BJ (cell line): ENCODE measurements at regions of chr1 and their contacts with region 1.

Region 1: DNA sequence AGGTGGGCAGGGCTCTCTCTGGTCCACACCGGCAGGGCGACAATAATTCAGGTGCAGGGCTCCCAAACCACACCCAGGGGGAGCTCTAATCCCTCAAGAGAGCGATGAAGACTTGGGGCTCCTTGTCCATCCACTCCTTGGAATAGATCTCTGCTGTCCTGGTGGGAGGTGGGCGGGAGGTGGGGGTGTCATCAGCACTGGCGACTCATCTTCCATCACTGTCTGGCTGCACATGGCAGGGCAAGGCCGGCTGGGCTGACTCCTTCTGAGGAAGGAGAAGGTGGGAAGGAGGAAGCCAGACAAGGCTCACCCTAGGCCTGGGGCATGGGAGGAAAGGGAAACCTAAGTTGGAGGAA is 29.3 kb downstream of the TNNT2 start:
- DNase-seq: no peak
- H3K4me3 ChIP-seq: no peak overlapping the region
- H3K27me3 ChIP-seq: peaks cover 9% of the 10 kb centered on the region
- CTCF ChIP-seq: peak; percentile 78

Region 2: GRCh38 chr1:201254625-201255506 is 93.3 kb before region 1 on chr1:
- CTCF ChIA-PET with region 1: interaction called, 125 read pairs
- POLR2A ChIA-PET with region 1: no interaction called
- DNase-seq: no peak
- H3K4me3 ChIP-seq: no peak overlapping the region
- H3K27me3 ChIP-seq: peaks cover 1% of the 10 kb centered on the region; the same call in 1 of the 2 replicates
- CTCF ChIP-seq: peak; percentile 99

Region 3: GRCh38 chr1:201288766-201289165 is 59.4 kb before region 1 on chr1:
- CTCF ChIA-PET with region 1: interaction called, 10 read pairs
- POLR2A ChIA-PET with region 1: no interaction called
- DNase-seq: no peak
- H3K4me3 ChIP-seq: no peak overlapping the region
- H3K27me3 ChIP-seq: peaks cover 7% of the 10 kb centered on the region
- CTCF ChIP-seq: no peak

Region 4: GRCh38 chr1:201329286-201329685 is 18.9 kb before region 1 on chr1:
- CTCF ChIA-PET with region 1: interaction called, 43 read pairs
- POLR2A ChIA-PET with region 1: no interaction called
- DNase-seq: no peak
- H3K4me3 ChIP-seq: no peak overlapping the region
- H3K27me3 ChIP-seq: peaks cover 9% of the 10 kb centered on the region
- CTCF ChIP-seq: no peak

Region 5: GRCh38 chr1:201361652-201362504 is 13.7 kb after region 1 on chr1:
- CTCF ChIA-PET with region 1: interaction called, 136 read pairs
- POLR2A ChIA-PET with region 1: no interaction called
- DNase-seq: no peak
- H3K4me3 ChIP-seq: no peak overlapping the region
- H3K27me3 ChIP-seq: peaks cover 9% of the 10 kb centered on the region
- CTCF ChIP-seq: peak; percentile 82

Region 6: GRCh38 chr1:201399352-201400126 is 51.4 kb after region 1 on chr1:
- CTCF ChIA-PET with region 1: interaction called, 44 read pairs
- POLR2A ChIA-PET with region 1: no interaction called
- DNase-seq: no peak
- H3K4me3 ChIP-seq: no peak overlapping the region
- H3K27me3 ChIP-seq: peaks cover 53% of the 10 kb centered on the region
- CTCF ChIP-seq: no peak

Region 7: DNA sequence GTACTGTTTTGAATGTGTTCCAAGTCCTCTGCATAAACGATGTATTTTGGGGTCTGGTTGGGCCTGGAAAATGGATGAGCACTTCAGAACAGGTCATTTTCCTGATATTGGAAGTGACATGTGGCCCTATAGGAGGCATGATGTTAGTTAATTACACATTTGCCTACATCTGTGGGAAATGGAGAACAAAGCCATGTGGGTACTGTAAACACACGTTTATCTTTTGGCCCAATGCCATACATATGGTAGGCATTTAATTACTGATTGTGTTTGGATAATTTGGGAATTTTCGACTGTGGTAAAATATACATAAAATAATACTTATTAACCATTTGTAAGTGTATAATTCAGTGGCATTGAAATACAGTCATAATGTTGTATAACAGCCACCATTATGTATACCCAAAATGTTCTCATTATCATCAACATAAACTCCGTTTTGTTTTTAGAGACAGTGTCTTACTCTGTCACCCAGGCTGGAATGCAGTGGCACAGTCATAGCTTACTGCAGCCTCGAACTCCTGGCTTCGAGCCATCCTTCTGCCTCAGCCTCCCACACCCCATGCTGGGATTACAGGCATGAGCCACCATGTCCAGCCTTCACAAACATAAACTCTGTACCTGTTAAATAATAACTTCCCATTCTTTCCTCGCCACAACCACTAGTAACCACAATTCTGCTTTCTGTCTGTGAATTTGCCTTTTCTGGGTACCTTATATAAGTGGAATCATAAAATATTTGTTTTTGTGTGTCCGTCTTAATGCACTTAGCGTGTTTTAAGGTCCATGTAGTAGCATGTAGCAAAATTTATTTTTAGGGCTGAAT is 622.4 kb after region 1 on chr1:
- CTCF ChIA-PET with region 1: no interaction called
- POLR2A ChIA-PET with region 1: no interaction called
- DNase-seq: no peak
- H3K4me3 ChIP-seq: no peak overlapping the region
- H3K27me3 ChIP-seq: no peaks in the 10 kb centered on the region
- CTCF ChIP-seq: no peak